PC-9 (cell line): ENCODE measurements at regions of chr4 and their contacts with region 1.

Region 1: DNA sequence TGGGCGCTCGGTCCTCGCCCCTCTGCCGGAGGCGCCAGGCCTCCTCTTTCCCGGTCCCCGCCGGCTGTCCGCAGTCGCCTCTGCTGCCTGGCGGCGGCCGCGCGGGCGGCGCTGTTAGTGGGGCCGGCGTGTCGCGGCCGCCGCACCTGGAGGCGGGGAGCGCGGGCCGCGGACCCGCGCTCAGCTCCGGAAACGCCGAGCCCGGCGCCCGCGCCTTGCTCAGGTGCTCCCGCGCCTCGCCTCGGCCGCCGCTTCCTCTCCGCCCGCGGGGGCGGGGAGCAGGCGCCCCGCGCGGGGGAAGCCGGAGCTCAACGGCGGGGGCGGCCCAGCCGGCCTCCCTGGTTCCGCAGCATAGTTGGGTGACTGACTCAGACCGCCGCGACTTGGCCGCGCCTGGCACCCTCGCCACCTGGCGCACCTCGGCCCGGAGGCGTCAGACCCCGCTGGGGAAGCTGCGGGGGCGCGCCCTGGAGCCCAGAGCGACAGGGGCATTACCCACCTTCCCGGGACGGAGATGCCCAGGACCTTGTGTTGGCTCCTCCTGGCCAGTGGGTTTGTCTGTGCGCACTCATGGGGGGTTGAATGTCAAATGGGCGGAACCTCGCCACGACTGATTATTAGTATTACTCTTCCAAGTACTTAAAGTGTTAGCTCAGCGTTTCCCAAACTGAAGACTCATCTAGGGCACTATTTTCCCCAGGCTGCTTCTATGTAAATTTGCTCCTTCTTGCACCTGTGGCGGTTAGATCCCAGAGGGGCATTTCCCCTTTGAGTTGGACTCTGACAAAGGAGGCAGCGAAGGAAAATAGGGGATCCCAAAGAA is at the start of gene ARAP2:
- DNase-seq: peak; percentile 76 to 90
- H3K4me3 ChIP-seq: peak within 1 kb of the TSS; percentile 75
- H3K27ac ChIP-seq: peak within 1 kb of the TSS; percentile 81
- H3K4me1 ChIP-seq: peaks cover 29% of the 10 kb centered on the region
- H3K27me3 ChIP-seq: no peaks in the 10 kb centered on the region
- CTCF ChIP-seq: no peak
- total RNA-seq, gene ARAP2: 17.7 and 25.8 TPM in 2 replicates

Region 2: DNA sequence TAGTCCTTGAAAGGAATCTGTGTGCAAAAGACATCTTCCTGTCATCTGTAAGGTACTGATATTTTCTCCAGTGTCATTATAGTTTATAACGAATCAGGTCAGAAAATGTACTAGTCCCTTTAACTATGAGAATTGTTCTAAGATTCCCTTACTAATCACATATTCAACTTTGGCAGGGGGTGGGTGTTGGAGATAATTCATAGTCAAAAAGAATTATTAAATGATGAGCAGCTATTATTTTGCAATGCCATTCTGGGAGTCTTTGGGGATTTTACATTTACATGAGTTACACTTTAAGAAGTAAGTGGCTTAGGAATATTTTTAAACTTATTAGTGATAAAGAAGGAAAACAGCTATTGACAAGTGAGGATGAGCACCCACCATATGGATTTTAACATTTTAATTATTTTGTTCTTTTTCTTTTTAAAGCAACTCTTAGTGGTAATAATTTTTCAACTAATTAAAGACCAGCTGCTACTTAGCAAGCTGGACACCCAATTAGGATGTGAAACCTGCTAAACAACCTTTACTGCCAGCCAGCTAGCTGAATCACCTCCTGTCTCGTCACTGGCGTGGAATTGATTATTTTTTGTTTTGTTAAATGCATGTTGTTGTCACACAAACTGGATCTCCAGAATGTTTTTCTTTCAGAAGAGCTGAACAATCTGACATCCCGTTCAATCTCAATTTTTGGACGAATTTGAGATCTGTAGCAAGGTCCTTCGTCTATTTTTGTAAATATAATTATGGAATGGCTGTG is 219.4 kb before region 1 on chr4:
- CTCF ChIA-PET with region 1: interaction called, 3 read pairs
- POLR2A ChIA-PET with region 1: interaction called, 20 read pairs
- intact Hi-C with region 1: no loop called
- DNase-seq: peak; percentile 37 to 72
- H3K4me3 ChIP-seq: peak overlapping the region; percentile 42
- H3K27ac ChIP-seq: peak overlapping the region; percentile 47
- H3K4me1 ChIP-seq: peaks cover 24% of the 10 kb centered on the region
- H3K27me3 ChIP-seq: no peaks in the 10 kb centered on the region
- CTCF ChIP-seq: no peak

Region 3: DNA sequence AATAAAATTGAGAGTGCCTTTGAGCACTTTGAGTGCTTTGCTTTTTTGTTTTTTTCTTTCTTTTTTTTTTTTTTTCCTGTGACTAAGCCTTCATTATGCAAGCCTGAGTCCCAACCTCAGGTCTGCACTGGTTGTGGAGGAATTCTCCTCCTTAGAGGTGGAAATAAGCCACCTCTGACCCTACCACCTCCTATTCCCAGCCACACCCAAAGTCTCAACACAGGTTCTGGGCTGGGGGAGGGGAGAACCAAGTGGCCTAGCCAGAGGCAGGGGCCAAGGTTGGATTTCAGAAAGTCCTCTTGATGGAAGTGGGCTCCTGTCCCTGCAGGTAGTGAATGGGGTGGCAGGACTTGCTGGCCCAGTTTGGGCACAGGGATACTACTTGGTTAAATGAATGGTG is 180.3 kb before region 1 on chr4:
- CTCF ChIA-PET with region 1: no interaction called
- POLR2A ChIA-PET with region 1: no interaction called
- intact Hi-C with region 1: no loop called
- DNase-seq: peak; percentile 3 to 41
- H3K4me3 ChIP-seq: no peak overlapping the region
- H3K27ac ChIP-seq: no peak overlapping the region; the same call in 1 of the 2 replicates
- H3K4me1 ChIP-seq: peaks cover 9% of the 10 kb centered on the region; the same call in 1 of the 2 replicates
- H3K27me3 ChIP-seq: no peaks in the 10 kb centered on the region
- CTCF ChIP-seq: no peak

Region 4: GRCh38 chr4:36255577-36255976 is 11.1 kb after region 1 on chr4:
- CTCF ChIA-PET with region 1: no interaction called
- POLR2A ChIA-PET with region 1: interaction called, 15 read pairs
- intact Hi-C with region 1: no loop called
- DNase-seq: no peak
- H3K4me3 ChIP-seq: no peak overlapping the region
- H3K27ac ChIP-seq: no peak overlapping the region
- H3K4me1 ChIP-seq: no peaks in the 10 kb centered on the region
- H3K27me3 ChIP-seq: no peaks in the 10 kb centered on the region
- CTCF ChIP-seq: no peak

Region 5: GRCh38 chr4:36280555-36280954 is 36.1 kb after region 1 on chr4:
- CTCF ChIA-PET with region 1: no interaction called
- POLR2A ChIA-PET with region 1: no interaction called
- intact Hi-C with region 1: no loop called
- DNase-seq: no peak
- H3K4me3 ChIP-seq: no peak overlapping the region
- H3K27ac ChIP-seq: no peak overlapping the region
- H3K4me1 ChIP-seq: no peaks in the 10 kb centered on the region
- H3K27me3 ChIP-seq: no peaks in the 10 kb centered on the region
- CTCF ChIP-seq: no peak

Region 6: DNA sequence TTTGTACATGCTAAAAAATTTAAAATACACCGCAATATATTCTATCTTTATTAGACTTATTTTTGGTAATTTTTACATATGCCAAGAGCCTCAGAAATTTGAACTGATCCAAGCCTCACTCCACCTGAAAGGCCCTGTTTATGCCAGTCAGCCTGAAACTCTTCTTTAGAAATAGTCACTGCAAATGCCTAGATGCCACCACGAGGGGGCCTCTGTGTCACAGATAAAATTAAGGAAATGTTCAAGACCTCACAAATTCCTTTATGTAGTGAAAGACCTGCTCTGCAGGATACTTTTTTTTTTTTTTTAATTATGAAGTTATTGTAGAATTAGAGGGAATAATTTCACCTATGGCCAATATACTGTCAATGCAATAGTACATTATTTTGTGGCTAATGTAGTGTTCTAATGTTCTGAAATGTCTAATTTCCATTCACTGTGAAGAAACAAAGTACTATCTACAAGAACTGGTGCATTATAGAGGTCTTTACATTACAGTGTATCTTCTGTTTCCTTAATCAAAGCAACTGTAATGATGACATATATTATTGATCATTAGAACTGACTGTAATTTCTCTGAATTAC is 106.7 kb after region 1 on chr4:
- CTCF ChIA-PET with region 1: no interaction called
- POLR2A ChIA-PET with region 1: no interaction called
- intact Hi-C with region 1: loop called (anchors 5 kb)
- DNase-seq: peak; percentile 50 to 52
- H3K4me3 ChIP-seq: no peak overlapping the region
- H3K27ac ChIP-seq: no peak overlapping the region
- H3K4me1 ChIP-seq: no peaks in the 10 kb centered on the region
- H3K27me3 ChIP-seq: no peaks in the 10 kb centered on the region
- CTCF ChIP-seq: peak; percentile 85

Region 7: DNA sequence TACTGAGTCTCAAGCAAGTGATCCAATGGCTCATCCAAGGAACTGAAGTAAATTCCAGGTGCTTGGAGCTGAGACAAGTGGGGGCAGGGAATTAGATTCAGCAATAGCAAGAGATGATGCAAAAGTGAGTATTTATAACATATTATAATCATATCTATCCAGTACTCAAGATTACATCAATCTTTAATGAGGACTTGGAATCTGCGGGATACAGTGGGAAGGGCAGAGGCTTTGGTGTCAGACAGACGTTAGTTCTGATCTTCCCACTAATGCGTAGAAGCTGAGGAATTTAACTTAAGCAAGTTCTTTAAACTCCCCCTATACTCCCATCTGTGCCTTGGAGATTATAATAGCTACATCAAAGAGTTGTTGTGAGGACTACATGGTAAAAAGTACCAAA is 856.7 kb after region 1 on chr4:
- CTCF ChIA-PET with region 1: no interaction called
- POLR2A ChIA-PET with region 1: no interaction called
- intact Hi-C with region 1: no loop called
- DNase-seq: no peak
- H3K4me3 ChIP-seq: no peak overlapping the region
- H3K27ac ChIP-seq: no peak overlapping the region
- H3K4me1 ChIP-seq: no peaks in the 10 kb centered on the region
- H3K27me3 ChIP-seq: no peaks in the 10 kb centered on the region
- CTCF ChIP-seq: no peak

Region 8: DNA sequence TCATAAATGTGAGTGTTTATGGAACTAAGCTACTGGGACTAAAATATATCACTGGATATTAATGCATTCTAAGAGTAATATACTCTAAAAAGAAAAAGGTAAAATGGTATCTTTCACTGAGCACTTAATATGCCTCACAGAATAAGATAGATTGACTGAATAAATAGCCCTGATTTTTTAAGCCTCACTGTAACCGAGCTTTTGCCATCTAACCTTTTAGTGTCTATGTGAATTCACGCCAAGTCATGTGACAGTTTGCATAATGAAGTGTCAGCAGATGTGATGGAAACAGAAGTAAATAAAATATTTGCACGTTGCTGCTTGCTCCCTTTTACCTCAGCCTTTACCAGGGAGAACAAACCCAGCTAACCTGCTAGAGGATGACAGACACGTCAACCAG is 880.3 kb after region 1 on chr4:
- CTCF ChIA-PET with region 1: no interaction called
- POLR2A ChIA-PET with region 1: no interaction called
- intact Hi-C with region 1: no loop called
- DNase-seq: no peak
- H3K4me3 ChIP-seq: no peak overlapping the region
- H3K27ac ChIP-seq: no peak overlapping the region
- H3K4me1 ChIP-seq: no peaks in the 10 kb centered on the region
- H3K27me3 ChIP-seq: no peaks in the 10 kb centered on the region
- CTCF ChIP-seq: no peak